Posterior cingulate gyrus (tissue), 11 donors: ENCODE measurements at regions of chr6 and their contacts with region 1.

Region 1: DNA sequence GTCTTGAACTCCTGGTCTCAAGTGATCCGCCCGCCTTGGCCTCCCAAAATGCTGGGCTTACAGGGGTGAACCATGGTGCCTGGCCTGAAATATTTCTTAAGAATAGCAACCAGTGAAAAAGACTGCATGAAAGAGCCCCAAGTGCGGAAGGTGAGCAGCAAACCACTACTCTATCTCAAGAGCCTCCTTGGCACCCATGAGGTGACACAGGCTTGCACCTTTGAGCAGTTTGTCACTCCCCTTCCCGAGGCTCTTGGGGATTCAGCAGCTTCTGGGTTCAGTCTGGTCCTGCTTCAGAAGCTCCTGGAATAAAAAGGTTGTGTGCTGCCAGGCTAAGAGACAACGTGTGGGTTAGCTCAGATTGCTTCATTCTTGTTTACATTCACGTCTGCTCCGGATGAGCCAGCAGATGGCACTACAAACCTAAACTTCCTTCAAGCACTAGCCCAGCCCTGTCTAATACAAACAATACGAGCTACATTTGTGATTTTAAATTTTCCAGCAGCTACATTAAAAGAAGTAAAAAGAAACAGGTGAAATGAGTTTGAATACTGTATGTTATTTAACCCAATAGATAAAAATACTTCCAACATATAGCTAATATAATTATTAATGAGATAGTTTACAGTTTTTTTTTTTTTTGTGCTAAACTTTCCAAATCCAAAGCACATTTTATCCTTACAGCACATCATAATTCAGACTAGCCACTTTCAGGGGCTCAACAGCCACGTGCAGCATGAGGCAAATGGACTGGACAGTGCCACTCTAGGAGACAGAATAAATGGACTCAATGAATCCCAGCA is 46.2 kb downstream of the GJA10 start:
- DNase-seq: peak in 9 of 10 donors; percentile 49 to 95 (median 79)

Region 2: DNA sequence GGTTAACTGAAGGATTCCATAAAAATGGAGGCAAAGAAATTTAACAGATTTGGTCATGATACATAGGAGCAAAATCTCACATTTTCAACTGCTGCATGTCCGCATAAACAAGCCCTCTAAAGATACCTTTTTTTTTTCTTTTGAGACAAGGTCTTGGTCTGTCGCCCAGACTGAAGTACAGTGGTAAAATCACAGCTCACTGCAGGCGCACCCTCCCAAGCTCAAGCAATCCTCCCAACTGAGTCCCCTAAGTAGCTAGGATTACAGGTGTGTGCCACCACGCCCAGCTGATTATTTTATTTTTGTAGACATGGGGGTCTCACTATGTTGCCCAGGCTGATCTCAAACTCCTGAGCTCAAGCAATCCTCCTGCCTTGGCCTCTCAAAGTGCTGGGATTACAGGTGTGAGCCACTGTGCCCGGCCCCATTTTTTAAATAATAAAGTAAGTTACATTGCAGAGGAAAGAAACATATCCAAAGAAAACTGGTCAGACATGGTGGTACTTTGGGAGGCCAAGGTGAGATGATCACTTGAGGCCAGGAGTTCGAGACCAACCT is 134.5 kb before region 1 on chr6:
- intact Hi-C with region 1: no loop called
- DNase-seq: no peak

Region 3: GRCh38 chr6:90393232-90393884 is 452.9 kb after region 1 on chr6:
- intact Hi-C with region 1: loop called (anchors 5 kb)
- DNase-seq: peak in 4 of 10 donors; percentile 45 to 90 (median 62)

Region 4: DNA sequence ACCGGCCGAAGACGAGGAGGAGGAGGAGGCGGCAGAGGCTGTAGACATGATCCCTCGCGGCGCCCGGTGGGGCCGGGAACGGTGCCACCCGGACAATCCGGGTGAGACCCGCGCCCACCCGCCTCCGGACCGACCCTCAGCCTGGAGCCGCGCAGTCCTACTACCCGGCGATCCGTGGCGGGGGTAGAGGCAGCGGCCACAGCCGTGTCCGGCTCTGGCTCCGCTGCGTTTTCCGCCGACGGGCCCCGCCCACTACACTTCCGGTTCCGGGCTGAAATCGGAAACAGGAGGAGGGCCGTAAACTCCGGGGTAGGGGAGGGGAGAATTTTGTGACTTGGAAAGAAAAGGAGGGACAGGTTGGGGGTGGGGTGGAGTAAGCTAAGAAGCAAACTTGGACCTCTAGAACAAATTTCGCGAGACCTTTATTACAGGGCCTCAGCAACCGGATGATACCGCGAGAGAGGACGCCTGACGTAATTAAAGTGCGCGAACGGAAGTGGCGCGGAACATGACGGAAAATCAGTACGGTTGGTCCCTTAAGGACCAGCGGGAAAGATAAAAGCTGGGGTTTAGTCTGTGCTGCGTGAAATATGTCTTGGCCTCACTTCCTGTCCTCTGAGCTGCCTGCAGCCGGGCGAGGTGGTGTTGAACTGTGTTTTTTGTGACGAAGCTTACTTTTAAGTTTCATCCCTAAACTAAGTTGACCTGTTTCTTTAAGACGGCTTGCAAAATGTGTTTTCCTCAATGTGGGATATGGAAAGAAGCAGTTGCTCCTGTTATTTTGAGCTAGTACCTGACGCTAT is 646.6 kb after region 1 on chr6 and contains the start of gene MAP3K7:
- intact Hi-C with region 1: loop called (anchors 5 kb)
- DNase-seq: peak; percentile 87 to 99 (median 93)